K562 (cell line): ENCODE measurements at regions of chr2 and their contacts with region 1.

Region 1: GRCh38 chr2:208466151-208466919 is 59.7 kb downstream of the PTH2R start:
- DNase-seq: peak; percentile 33 to 74 (median 44)
- ATAC-seq: peak; percentile 93
- H3K4me3 ChIP-seq: no peak overlapping the region
- H3K27ac ChIP-seq: no peak overlapping the region
- H3K4me1 ChIP-seq: no peaks in the 10 kb centered on the region
- H3K27me3 ChIP-seq: no peaks in the 10 kb centered on the region
- CTCF ChIP-seq: peak; percentile 62 to 70 (median 70)
- EP300 ChIP-seq: no peak
- POLR2A ChIP-seq: no peak
- RAD21 ChIP-seq: peak; percentile 72 to 86

Region 2: GRCh38 chr2:207902821-207903220 is 563.5 kb before region 1 on chr2:
- CTCF ChIA-PET with region 1: no interaction called
- POLR2A ChIA-PET with region 1: no interaction called
- in situ Hi-C with region 1: no loop called
- intact Hi-C with region 1: no loop called
- DNase-seq: no peak
- ATAC-seq: no peak
- H3K4me3 ChIP-seq: no peak overlapping the region
- H3K27ac ChIP-seq: no peak overlapping the region
- H3K4me1 ChIP-seq: no peaks in the 10 kb centered on the region
- H3K27me3 ChIP-seq: no peaks in the 10 kb centered on the region
- CTCF ChIP-seq: no peak
- EP300 ChIP-seq: no peak
- POLR2A ChIP-seq: no peak
- RAD21 ChIP-seq: no peak

Region 3: GRCh38 chr2:208570851-208571764 is 104.8 kb after region 1 on chr2:
- CTCF ChIA-PET with region 1: no interaction called
- POLR2A ChIA-PET with region 1: no interaction called
- in situ Hi-C with region 1: no loop called
- intact Hi-C with region 1: loop called (anchors 1 kb)
- DNase-seq: peak; percentile 15 to 57 (median 28)
- ATAC-seq: peak; percentile 83
- H3K4me3 ChIP-seq: peak overlapping the region; percentile 10; the same call in 1 of the 2 replicates
- H3K27ac ChIP-seq: peak overlapping the region; percentile 76
- H3K4me1 ChIP-seq: peaks cover 17 to 36% of the 10 kb centered on the region in 2 experiments
- H3K27me3 ChIP-seq: no peaks in the 10 kb centered on the region
- CTCF ChIP-seq: peak; percentile 8 to 43 (median 22); a peak in 4 of 6 replicates
- EP300 ChIP-seq: no peak
- POLR2A ChIP-seq: no peak
- RAD21 ChIP-seq: peak in 1 of 2 experiments; percentile 1; a peak in 1 of 4 replicates

Region 4: GRCh38 chr2:208783187-208783586 is 316.9 kb after region 1 on chr2:
- CTCF ChIA-PET with region 1: no interaction called
- POLR2A ChIA-PET with region 1: no interaction called
- in situ Hi-C with region 1: no loop called
- intact Hi-C with region 1: loop called (anchors 5 kb)
- DNase-seq: peak in 1 of 4 experiments; percentile 5
- ATAC-seq: no peak; the same call in 2 of the 3 replicates
- H3K4me3 ChIP-seq: no peak overlapping the region
- H3K27ac ChIP-seq: no peak overlapping the region
- H3K4me1 ChIP-seq: no peaks in the 10 kb centered on the region
- H3K27me3 ChIP-seq: no peaks in the 10 kb centered on the region
- CTCF ChIP-seq: 0 out of 6 replicates have a peak, but pooled peaks of 1 of the 3 experiments have one; percentile 12
- EP300 ChIP-seq: no peak
- POLR2A ChIP-seq: no peak
- RAD21 ChIP-seq: no peak

Region 5: GRCh38 chr2:209074711-209075110 is 608.4 kb after region 1 on chr2:
- CTCF ChIA-PET with region 1: no interaction called
- POLR2A ChIA-PET with region 1: no interaction called
- in situ Hi-C with region 1: loop called (anchors 5 kb)
- intact Hi-C with region 1: no loop called
- DNase-seq: no peak
- ATAC-seq: no peak
- H3K4me3 ChIP-seq: no peak overlapping the region
- H3K27ac ChIP-seq: no peak overlapping the region
- H3K4me1 ChIP-seq: no peaks in the 10 kb centered on the region
- H3K27me3 ChIP-seq: no peaks in the 10 kb centered on the region
- CTCF ChIP-seq: no peak
- EP300 ChIP-seq: no peak
- POLR2A ChIP-seq: no peak
- RAD21 ChIP-seq: no peak

Region 6: GRCh38 chr2:209208211-209208610 is 741.9 kb after region 1 on chr2:
- CTCF ChIA-PET with region 1: interaction called, 9 read pairs
- POLR2A ChIA-PET with region 1: no interaction called
- in situ Hi-C with region 1: no loop called
- intact Hi-C with region 1: loop called (anchors 1 kb)
- DNase-seq: peak; percentile 8 to 44 (median 16)
- ATAC-seq: peak; percentile 60; the same call in 2 of the 3 replicates
- H3K4me3 ChIP-seq: 0 out of 2 replicates have a peak overlapping the region, but pooled peaks have one; percentile 17
- H3K27ac ChIP-seq: no peak overlapping the region
- H3K4me1 ChIP-seq: peaks cover 0 to 6% of the 10 kb centered on the region in 2 experiments; a peak in 1 of 5 replicates
- H3K27me3 ChIP-seq: no peaks in the 10 kb centered on the region
- CTCF ChIP-seq: peak; percentile 15 to 70 (median 48); a peak in 4 of 6 replicates
- EP300 ChIP-seq: no peak
- POLR2A ChIP-seq: no peak
- RAD21 ChIP-seq: peak; percentile 79 to 80

Region 7: GRCh38 chr2:209334198-209335017 is 868.1 kb after region 1 on chr2:
- CTCF ChIA-PET with region 1: interaction called, 3 read pairs
- POLR2A ChIA-PET with region 1: no interaction called
- in situ Hi-C with region 1: no loop called
- intact Hi-C with region 1: loop called (anchors 5 kb)
- DNase-seq: peak; percentile 9 to 41 (median 21)
- ATAC-seq: 0 out of 3 replicates have a peak, but pooled peaks have one; percentile 42
- H3K4me3 ChIP-seq: no peak overlapping the region
- H3K27ac ChIP-seq: no peak overlapping the region
- H3K4me1 ChIP-seq: no peaks in the 10 kb centered on the region
- H3K27me3 ChIP-seq: no peaks in the 10 kb centered on the region
- CTCF ChIP-seq: peak; percentile 47 to 52 (median 51); a peak in 4 of 6 replicates
- EP300 ChIP-seq: no peak
- POLR2A ChIP-seq: no peak
- RAD21 ChIP-seq: peak; percentile 41 to 50